A673 (cell line): ENCODE measurements at regions of chr17 and their contacts with region 1.

Region 1: DNA sequence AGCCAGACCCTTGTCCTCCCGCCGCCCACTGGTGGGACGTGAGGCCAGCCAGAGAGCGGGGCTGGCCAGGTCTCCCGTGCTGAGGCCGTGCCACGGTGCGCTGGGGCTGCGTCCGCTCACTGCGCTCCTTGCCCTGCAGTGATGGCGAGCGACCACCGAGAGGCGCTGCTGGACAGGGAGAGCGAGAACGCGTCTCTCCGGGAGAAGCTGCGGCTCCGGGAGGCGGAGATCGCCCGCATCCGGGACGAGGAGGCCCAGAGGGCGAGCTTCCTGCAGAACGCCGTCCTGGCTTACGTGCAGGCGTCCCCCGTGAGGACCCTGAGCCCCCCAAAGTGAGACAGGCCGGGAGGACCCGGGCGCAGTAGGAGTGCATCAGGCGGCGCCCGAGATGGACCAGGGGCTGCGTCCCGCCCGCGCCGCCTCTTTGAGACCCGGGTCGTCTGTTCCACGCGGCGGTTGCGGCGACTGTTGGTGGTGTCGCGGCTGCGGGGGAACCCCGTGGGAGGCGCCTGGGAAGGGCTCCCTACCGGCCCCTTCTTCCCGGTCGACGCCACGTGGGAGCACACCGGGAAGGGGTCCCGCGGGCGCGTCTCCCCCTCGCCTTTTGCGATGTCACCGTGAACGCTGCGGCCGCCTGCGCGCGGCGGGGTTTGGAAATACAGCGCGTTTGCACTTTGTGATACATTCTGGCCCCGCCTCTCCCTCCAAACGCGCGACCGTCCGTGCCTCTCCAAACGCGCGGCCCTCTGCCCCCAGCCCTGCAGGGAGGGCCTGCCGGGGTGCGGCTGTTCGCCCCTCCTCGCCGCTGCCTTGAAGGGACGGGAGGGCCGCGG is 792 bp upstream of the RAC3 start:
- DNase-seq: peak; percentile 91
- H3K4me3 ChIP-seq: peak overlapping the region; percentile 67
- H3K27ac ChIP-seq: peak overlapping the region; percentile 62
- H3K4me1 ChIP-seq: no peaks in the 10 kb centered on the region
- H3K27me3 ChIP-seq: no peaks in the 10 kb centered on the region
- CTCF ChIP-seq: peak; percentile 82

Region 2: DNA sequence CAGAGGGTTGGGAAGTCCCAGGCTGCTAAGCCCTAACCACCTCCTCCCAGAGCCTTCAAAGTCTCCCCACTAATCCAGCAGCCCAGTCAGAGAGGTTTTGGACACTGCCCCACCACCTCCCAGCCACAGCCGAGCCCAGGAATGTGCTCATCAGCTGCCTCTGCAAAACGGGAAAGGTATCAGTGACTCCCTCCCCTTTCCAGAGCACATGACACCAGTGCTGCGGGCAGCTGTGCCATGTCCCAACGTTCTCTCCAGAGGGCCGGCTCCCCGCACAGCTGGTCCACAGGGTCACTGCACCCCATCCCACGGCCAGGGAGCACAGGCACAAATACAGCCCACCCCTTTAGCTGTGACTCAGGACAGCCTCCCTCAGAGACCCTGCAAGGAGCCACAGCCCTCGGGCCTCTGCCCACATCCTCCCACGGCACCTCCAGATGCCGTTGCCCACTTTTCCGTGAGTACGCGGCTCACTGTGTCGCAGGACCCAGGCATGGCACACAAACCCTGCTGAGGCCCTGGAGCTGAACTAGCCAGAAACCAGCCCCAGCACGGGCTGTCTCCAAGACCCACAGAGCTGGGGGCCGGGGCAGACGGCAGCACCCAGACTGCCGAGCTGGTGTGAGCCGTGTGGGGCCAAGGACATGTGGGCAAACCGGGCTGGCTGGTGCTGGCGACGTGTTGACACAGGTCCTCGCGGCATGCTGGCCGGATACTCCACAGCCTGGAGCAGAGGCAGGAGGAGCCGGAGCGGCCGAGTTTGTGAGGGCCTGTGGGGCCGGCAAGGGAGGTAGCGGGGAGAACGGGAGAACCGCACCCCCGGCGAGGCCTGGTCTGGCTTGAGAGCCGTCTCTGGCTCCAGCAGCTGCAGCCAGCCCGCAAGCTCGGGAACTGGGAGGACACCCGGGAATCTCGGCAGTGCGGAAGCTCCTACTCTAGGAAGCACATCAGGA is 189.6 kb before region 1 on chr17:
- CTCF ChIA-PET with region 1: no interaction called
- POLR2A ChIA-PET with region 1: no interaction called
- intact Hi-C with region 1: no loop called
- DNase-seq: no peak
- H3K4me3 ChIP-seq: no peak overlapping the region
- H3K27ac ChIP-seq: no peak overlapping the region
- H3K4me1 ChIP-seq: no peaks in the 10 kb centered on the region
- H3K27me3 ChIP-seq: no peaks in the 10 kb centered on the region
- CTCF ChIP-seq: no peak

Region 3: GRCh38 chr17:81871387-81872230 is 159.1 kb before region 1 on chr17:
- CTCF ChIA-PET with region 1: interaction called, 12 read pairs
- POLR2A ChIA-PET with region 1: no interaction called
- intact Hi-C with region 1: no loop called
- DNase-seq: peak; percentile 95
- H3K4me3 ChIP-seq: peak overlapping the region; percentile 80
- H3K27ac ChIP-seq: peak overlapping the region; percentile 100
- H3K4me1 ChIP-seq: peaks cover 31% of the 10 kb centered on the region
- H3K27me3 ChIP-seq: no peaks in the 10 kb centered on the region
- CTCF ChIP-seq: peak; percentile 38; the same call in 1 of the 2 replicates

Region 4: DNA sequence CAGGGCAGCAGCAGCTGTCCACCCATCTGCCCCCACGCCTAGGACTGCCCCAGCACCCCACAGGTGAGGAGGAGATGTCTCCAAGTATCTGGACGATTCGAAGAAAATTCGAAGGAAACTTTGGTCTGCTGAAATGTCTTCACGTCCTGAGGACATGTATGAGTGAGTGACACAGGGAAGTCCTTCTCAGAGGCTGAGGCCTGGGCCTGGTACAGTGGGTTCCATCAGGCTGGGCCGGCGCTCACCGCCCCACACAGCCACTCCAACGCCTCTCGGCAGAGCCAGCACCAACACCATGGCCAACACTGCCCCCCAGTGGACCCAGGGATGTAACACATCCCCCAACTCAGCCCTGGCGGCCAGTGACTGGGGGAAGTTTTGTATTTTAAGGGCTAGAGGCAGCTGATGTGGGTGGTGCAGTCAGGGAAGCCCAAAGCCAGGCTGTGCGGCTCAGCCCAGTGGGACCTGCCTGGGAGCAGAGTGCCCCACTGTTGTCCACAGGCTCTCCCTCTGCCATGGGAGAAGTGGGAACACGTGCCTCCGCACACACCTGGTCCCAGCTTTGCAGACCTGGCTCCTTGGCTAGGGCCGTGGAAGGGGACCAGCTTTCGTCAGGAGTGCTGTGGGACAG is 123.2 kb after region 1 on chr17:
- CTCF ChIA-PET with region 1: interaction called, 19 read pairs
- POLR2A ChIA-PET with region 1: interaction called, 4 read pairs
- intact Hi-C with region 1: loop called (anchors 5 kb)
- DNase-seq: peak; percentile 81
- H3K4me3 ChIP-seq: no peak overlapping the region
- H3K27ac ChIP-seq: no peak overlapping the region
- H3K4me1 ChIP-seq: no peaks in the 10 kb centered on the region
- H3K27me3 ChIP-seq: no peaks in the 10 kb centered on the region
- CTCF ChIP-seq: peak; percentile 90